ENCODE measurements at regions of chr15 and their contacts with region 1.

Region 1: GRCh38 chr15:45468294-45468693 is 54.3 kb downstream of the SLC30A4 start:
- DNase-seq: no peak
- ATAC-seq: no peak
- H3K4me3 ChIP-seq: no peak overlapping the region
- H3K27ac ChIP-seq: no peak overlapping the region
- H3K4me1 ChIP-seq: no peaks in the 10 kb centered on the region
- H3K27me3 ChIP-seq: no peaks in the 10 kb centered on the region
- CTCF ChIP-seq: no peak
- POLR2A ChIP-seq: no peak

Region 2: DNA sequence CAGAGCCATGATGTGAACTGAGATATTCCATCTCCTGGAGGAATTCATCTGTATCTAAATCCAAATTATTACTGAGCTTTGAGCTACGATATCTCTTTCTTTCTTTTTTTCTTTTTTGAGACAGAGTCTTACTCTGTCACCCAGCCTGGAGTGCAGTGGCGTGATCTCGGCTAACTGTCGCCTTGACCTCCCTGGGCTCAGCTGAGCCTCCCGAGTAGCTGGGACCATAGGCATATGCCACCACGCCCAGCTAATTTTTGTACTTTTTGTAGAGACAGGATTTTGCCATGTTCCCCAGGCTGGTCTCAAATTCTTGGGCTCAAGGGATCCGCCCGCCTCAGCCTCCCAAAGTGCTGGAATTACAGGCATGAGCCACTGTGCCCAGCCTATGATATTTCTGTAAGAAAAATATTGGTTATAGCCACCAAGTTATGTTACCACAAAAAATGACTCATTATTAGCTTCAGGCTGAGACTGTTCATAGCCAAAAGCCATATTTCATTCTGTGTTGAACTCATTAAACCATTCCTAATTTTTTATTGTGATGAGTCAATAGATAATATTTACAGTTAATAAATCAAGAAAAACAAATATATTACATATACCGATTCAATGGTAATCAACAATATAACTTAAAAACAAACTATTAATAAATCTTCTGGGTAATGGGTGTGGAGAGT is 81.4 kb after region 1 on chr15:
- intact Hi-C with region 1: no loop called
- DNase-seq: no peak
- ATAC-seq: no peak
- H3K4me3 ChIP-seq: no peak overlapping the region
- H3K27ac ChIP-seq: no peak overlapping the region
- H3K4me1 ChIP-seq: no peaks in the 10 kb centered on the region
- H3K27me3 ChIP-seq: no peaks in the 10 kb centered on the region
- CTCF ChIP-seq: no peak
- POLR2A ChIP-seq: no peak

Region 3: DNA sequence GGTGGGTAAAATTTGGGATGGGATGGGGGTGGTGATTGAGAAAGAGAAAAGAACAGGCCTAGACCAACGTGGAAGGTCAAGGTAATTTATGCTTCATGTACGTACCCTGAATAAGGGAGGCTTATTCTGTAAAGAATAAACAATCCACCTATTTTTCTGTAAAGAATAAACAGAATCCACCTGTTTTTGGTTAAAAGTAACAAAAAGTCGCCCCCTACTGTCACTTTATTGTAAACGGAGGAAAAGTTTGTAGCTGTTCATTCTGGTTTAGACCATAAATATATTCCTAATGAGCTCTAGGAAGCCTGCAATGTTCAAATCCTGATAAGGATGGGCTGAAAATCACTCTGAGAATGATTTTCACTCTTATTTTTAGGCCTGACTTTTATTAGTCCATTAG is 143.0 kb after region 1 on chr15:
- intact Hi-C with region 1: loop called (anchors 5 to 10 kb)
- DNase-seq: no peak
- ATAC-seq: peak in 1 of 4 donors; percentile 46
- H3K4me3 ChIP-seq: no peak overlapping the region
- H3K27ac ChIP-seq: no peak overlapping the region
- H3K4me1 ChIP-seq: no peaks in the 10 kb centered on the region
- H3K27me3 ChIP-seq: no peaks in the 10 kb centered on the region
- CTCF ChIP-seq: peak; percentile 27 to 44 (median 36)
- POLR2A ChIP-seq: no peak